ENCODE measurements at regions of chr9 and their contacts with region 1.

Region 1: GRCh38 chr9:34437006-34437925 is 21.1 kb downstream of the FAM219A start:
- DNase-seq: peak; percentile 34 to 87 (median 51)
- ATAC-seq: peak; percentile 95
- H3K4me3 ChIP-seq: no peak overlapping the region
- H3K4me3 Mint-ChIP-seq: no peak overlapping the region
- H3K27ac ChIP-seq: no peak overlapping the region
- H3K27ac Mint-ChIP-seq: no peak overlapping the region
- H3K4me1 ChIP-seq: peaks cover 9% of the 10 kb centered on the region
- H3K4me1 Mint-ChIP-seq: peaks cover 22% of the 10 kb centered on the region
- H3K27me3 ChIP-seq: no peaks in the 10 kb centered on the region
- H3K27me3 Mint-ChIP-seq: no peaks in the 10 kb centered on the region
- CTCF ChIP-seq: peak; percentile 69

Region 2: GRCh38 chr9:34332076-34332964 is 104.9 kb before region 1 on chr9:
- CTCF ChIA-PET with region 1: no interaction called
- POLR2A ChIA-PET with region 1: no interaction called
- intact Hi-C with region 1: no loop called
- DNase-seq: peak in 3 of 14 experiments; percentile 40 to 58 (median 57)
- ATAC-seq: no peak
- H3K4me3 ChIP-seq: no peak overlapping the region
- H3K4me3 Mint-ChIP-seq: peak overlapping the region; percentile 69
- H3K27ac ChIP-seq: no peak overlapping the region
- H3K27ac Mint-ChIP-seq: peak overlapping the region; percentile 8
- H3K4me1 ChIP-seq: peaks cover 21% of the 10 kb centered on the region
- H3K4me1 Mint-ChIP-seq: peaks cover 51% of the 10 kb centered on the region
- H3K27me3 ChIP-seq: no peaks in the 10 kb centered on the region
- H3K27me3 Mint-ChIP-seq: no peaks in the 10 kb centered on the region
- CTCF ChIP-seq: peak; percentile 35

Region 3: DNA sequence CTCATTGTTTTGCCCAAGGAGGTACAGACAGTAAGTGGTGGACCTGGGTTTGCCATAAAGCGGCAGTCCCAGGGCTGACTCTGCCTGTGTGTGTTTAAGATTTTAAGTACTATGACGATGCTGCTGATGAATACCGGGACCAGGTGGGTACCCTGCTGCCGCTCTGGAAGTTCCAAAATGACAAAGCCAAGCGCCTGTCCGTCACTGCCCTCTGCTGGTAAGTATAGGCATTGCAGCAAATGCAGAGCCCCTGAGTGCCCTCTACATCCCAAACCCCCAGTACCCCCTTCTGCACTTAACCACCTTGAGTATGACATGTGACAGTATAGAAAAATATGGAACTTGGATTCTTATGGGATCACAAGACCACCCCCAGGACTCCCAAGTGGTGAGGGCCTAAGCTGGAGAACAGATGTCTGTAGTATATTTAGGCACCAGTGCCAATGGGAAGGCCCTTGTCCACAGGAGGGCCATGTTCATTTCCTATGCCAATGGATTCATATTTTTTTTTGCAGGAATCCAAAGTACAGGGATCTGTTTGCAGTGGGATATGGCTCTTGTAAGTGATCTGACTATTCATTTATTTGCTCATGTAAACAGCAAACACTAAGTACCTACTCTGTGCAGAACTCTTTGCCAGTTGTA is 63.5 kb after region 1 on chr9:
- CTCF ChIA-PET with region 1: interaction called, 3 read pairs
- POLR2A ChIA-PET with region 1: no interaction called
- intact Hi-C with region 1: loop called (anchors 1 kb)
- DNase-seq: peak; percentile 47 to 81 (median 66)
- ATAC-seq: peak; percentile 94
- H3K4me3 ChIP-seq: no peak overlapping the region
- H3K4me3 Mint-ChIP-seq: no peak overlapping the region
- H3K27ac ChIP-seq: no peak overlapping the region
- H3K27ac Mint-ChIP-seq: no peak overlapping the region
- H3K4me1 ChIP-seq: peaks cover 3% of the 10 kb centered on the region
- H3K4me1 Mint-ChIP-seq: no peaks in the 10 kb centered on the region
- H3K27me3 ChIP-seq: no peaks in the 10 kb centered on the region
- H3K27me3 Mint-ChIP-seq: peaks cover 10% of the 10 kb centered on the region
- CTCF ChIP-seq: peak; percentile 97

Region 4: GRCh38 chr9:34591248-34591916 is 154.1 kb after region 1 on chr9:
- CTCF ChIA-PET with region 1: interaction called, 9 read pairs
- POLR2A ChIA-PET with region 1: no interaction called
- intact Hi-C with region 1: loop called (anchors 1 kb)
- DNase-seq: peak; percentile 51 to 87 (median 72)
- ATAC-seq: peak; percentile 76
- H3K4me3 ChIP-seq: peak overlapping the region; percentile 63
- H3K4me3 Mint-ChIP-seq: peak overlapping the region; percentile 80
- H3K27ac ChIP-seq: no peak overlapping the region
- H3K27ac Mint-ChIP-seq: no peak overlapping the region
- H3K4me1 ChIP-seq: peaks cover 30% of the 10 kb centered on the region
- H3K4me1 Mint-ChIP-seq: peaks cover 26% of the 10 kb centered on the region
- H3K27me3 ChIP-seq: peaks cover 69 to 75% of the 10 kb centered on the region in 2 experiments
- H3K27me3 Mint-ChIP-seq: peaks cover 83% of the 10 kb centered on the region
- CTCF ChIP-seq: peak; percentile 89

Measured in CD4-positive, alpha-beta T cell (primary cell).